Endothelial cell of umbilical vein (primary cell): ENCODE measurements at regions of chr5 and their contacts with region 1.

Region 1: GRCh38 chr5:111432883-111433536 is 79.3 kb downstream of the STARD4 start:
- DNase-seq: no peak
- H3K4me3 ChIP-seq: no peak overlapping the region
- H3K27ac ChIP-seq: no peak overlapping the region
- H3K4me1 ChIP-seq: no peaks in the 10 kb centered on the region
- H3K27me3 ChIP-seq: no peaks in the 10 kb centered on the region
- CTCF ChIP-seq: no peak
- POLR2A ChIP-seq: no peak

Region 2: GRCh38 chr5:111313017-111313724 is 119.8 kb before region 1 on chr5:
- CTCF ChIA-PET with region 1: no interaction called
- POLR2A ChIA-PET with region 1: no interaction called
- dilution Hi-C with region 1: no loop called
- intact Hi-C with region 1: loop called (anchors 5 kb)
- DNase-seq: no peak
- H3K4me3 ChIP-seq: no peak overlapping the region
- H3K27ac ChIP-seq: no peak overlapping the region
- H3K4me1 ChIP-seq: no peaks in the 10 kb centered on the region
- H3K27me3 ChIP-seq: no peaks in the 10 kb centered on the region
- CTCF ChIP-seq: no peak
- POLR2A ChIP-seq: no peak